ENCODE measurements at regions of chr3 and their contacts with region 1.

Region 1: GRCh38 chr3:150408221-150409102 is at the start of gene TSC22D2:
- DNase-seq: peak; percentile 95
- H3K4me3 ChIP-seq: peak within 1 kb of the TSS; percentile 51 to 99 (median 80)
- H3K27ac ChIP-seq: peak within 1 kb of the TSS; percentile 100
- H3K4me1 ChIP-seq: peaks cover 14% of the 10 kb centered on the region
- H3K27me3 ChIP-seq: no peaks in the 10 kb centered on the region
- CTCF ChIP-seq: no peak
- POLR2A ChIP-seq: peak; percentile 79
- total RNA-seq, gene TSC22D2: 43.9 and 50.9 TPM in 2 replicates

Region 2: DNA sequence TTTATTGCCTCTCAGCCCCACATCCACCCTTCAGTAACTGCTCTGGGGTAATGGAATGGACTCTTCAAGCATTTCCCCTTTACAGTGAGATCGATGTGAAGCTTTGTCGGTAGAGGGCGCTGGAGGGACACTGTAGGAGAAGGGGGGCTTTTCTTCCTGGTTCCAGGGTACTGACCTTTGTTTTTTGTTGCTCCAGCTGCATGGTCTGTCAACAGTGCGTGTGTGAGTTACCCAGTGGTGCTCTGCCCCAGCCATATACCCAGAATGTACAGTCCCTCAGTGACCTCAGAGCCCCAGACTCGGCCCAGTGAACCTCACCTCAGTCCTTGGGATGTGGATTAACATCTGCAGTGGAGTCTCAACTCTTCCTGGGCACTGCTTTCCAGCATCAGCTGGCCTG is 180.6 kb before region 1 on chr3:
- CTCF ChIA-PET with region 1: interaction called, 76 read pairs
- POLR2A ChIA-PET with region 1: interaction called, 20 read pairs
- dilution Hi-C with region 1: loop called (anchors 25 kb)
- intact Hi-C with region 1: loop called (anchors 1 kb)
- DNase-seq: peak; percentile 72
- H3K4me3 ChIP-seq: no peak overlapping the region
- H3K27ac ChIP-seq: no peak overlapping the region
- H3K4me1 ChIP-seq: peaks cover 27% of the 10 kb centered on the region
- H3K27me3 ChIP-seq: peaks cover 25 to 26% of the 10 kb centered on the region in 2 experiments
- CTCF ChIP-seq: peak; percentile 82 to 84
- POLR2A ChIP-seq: no peak

Region 3: GRCh38 chr3:150286390-150287147 is 121.9 kb before region 1 on chr3:
- CTCF ChIA-PET with region 1: interaction called, 62 read pairs
- POLR2A ChIA-PET with region 1: interaction called, 3 read pairs
- dilution Hi-C with region 1: no loop called
- intact Hi-C with region 1: loop called (anchors 1 kb)
- DNase-seq: peak; percentile 68
- H3K4me3 ChIP-seq: no peak overlapping the region
- H3K27ac ChIP-seq: no peak overlapping the region
- H3K4me1 ChIP-seq: no peaks in the 10 kb centered on the region
- H3K27me3 ChIP-seq: no peaks in the 10 kb centered on the region
- CTCF ChIP-seq: peak; percentile 41 to 55
- POLR2A ChIP-seq: no peak

Region 4: GRCh38 chr3:150371741-150372254 is 36.7 kb before region 1 on chr3:
- CTCF ChIA-PET with region 1: interaction called, 14 read pairs
- POLR2A ChIA-PET with region 1: interaction called, 16 read pairs
- dilution Hi-C with region 1: no loop called
- intact Hi-C with region 1: loop called (anchors 1 kb)
- DNase-seq: peak; percentile 100
- H3K4me3 ChIP-seq: peak overlapping the region; percentile 7 to 91 (median 19)
- H3K27ac ChIP-seq: peak overlapping the region; percentile 94
- H3K4me1 ChIP-seq: peaks cover 39% of the 10 kb centered on the region
- H3K27me3 ChIP-seq: no peaks in the 10 kb centered on the region
- CTCF ChIP-seq: no peak
- POLR2A ChIP-seq: peak; percentile 86

Region 5: DNA sequence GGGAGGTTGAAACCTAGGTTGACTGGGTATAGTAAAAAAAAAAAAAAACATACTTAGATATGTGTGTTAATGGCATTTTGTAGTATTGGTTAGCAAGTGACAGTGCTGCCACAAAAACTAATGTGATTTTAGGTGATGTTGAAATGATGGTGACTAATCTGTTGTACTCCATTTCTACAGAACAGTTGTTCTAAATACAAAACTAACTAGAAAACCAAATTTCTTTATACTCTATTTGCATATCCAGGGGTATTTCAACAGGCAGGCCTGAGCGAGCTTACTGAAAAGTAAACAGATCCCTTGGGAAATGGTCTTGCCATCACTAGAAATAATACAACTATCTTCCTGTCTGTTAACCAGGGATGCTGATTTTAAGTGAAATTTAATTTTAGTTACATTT is 20.1 kb after region 1 on chr3:
- CTCF ChIA-PET with region 1: interaction called, 5 read pairs
- POLR2A ChIA-PET with region 1: interaction called, 3 read pairs
- dilution Hi-C with region 1: no loop called
- intact Hi-C with region 1: loop called (anchors 2 kb)
- DNase-seq: no peak
- H3K4me3 ChIP-seq: no peak overlapping the region
- H3K27ac ChIP-seq: no peak overlapping the region
- H3K4me1 ChIP-seq: peaks cover 6% of the 10 kb centered on the region
- H3K27me3 ChIP-seq: no peaks in the 10 kb centered on the region
- CTCF ChIP-seq: no peak
- POLR2A ChIP-seq: no peak

Region 6: GRCh38 chr3:150495563-150496168 is 87.2 kb after region 1 on chr3:
- CTCF ChIA-PET with region 1: interaction called, 219 read pairs
- POLR2A ChIA-PET with region 1: interaction called, 5 read pairs
- dilution Hi-C with region 1: no loop called
- intact Hi-C with region 1: loop called (anchors 1 kb)
- DNase-seq: peak; percentile 75
- H3K4me3 ChIP-seq: no peak overlapping the region
- H3K27ac ChIP-seq: no peak overlapping the region
- H3K4me1 ChIP-seq: peaks cover 9% of the 10 kb centered on the region
- H3K27me3 ChIP-seq: no peaks in the 10 kb centered on the region
- CTCF ChIP-seq: peak; percentile 36 to 42
- POLR2A ChIP-seq: no peak

Region 7: DNA sequence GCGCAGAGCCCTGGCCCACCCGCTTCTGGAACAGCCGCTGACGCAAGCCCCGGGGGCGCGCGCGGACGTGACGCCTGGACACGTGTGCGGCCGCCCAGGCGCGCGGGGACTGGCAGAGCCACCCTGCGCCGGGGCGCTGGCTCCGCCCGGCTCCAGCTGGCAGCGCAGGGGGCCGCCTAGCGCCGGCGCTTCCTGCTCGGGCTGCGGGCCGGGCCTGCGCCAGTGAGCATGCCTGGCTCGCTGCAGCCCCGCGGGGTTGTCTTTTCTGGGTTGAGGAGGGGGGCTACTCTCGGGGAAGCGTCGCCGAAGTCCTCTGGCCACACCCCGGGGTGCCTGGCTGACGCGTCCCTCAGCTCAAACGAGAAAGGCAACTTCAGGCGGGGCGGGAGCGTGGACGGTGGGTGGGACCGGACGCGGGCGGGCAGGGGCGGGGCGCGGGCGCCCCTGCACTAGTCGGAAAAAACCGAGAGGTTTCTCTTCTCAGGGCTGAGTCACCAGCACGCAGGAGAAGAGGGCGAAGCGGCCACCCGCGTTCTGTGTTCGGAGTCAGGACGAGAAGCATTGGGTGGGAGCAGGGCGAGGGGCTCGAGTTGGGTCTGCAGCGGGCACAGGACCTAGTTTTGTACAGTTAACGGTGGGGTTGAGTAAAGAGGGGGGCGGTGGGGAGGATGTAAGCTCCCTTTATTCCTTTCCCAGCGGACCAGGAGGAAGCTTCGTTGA is 354.8 kb after region 1 on chr3 and contains the start of gene SIAH2:
- CTCF ChIA-PET with region 1: no interaction called
- POLR2A ChIA-PET with region 1: no interaction called
- dilution Hi-C with region 1: no loop called
- intact Hi-C with region 1: loop called (anchors 10 kb)
- DNase-seq: peak; percentile 94
- H3K4me3 ChIP-seq: peak within 1 kb of the TSS; percentile 43 to 85 (median 64)
- H3K27ac ChIP-seq: peak within 1 kb of the TSS; percentile 86
- H3K4me1 ChIP-seq: peaks cover 19% of the 10 kb centered on the region
- H3K27me3 ChIP-seq: no peaks in the 10 kb centered on the region
- CTCF ChIP-seq: no peak
- POLR2A ChIP-seq: peak; percentile 92
- total RNA-seq, gene SIAH2: 16.0 and 16.7 TPM in 2 replicates